GM10248 (cell line): ENCODE measurements at regions of chr1 and their contacts with region 1.

Region 1: DNA sequence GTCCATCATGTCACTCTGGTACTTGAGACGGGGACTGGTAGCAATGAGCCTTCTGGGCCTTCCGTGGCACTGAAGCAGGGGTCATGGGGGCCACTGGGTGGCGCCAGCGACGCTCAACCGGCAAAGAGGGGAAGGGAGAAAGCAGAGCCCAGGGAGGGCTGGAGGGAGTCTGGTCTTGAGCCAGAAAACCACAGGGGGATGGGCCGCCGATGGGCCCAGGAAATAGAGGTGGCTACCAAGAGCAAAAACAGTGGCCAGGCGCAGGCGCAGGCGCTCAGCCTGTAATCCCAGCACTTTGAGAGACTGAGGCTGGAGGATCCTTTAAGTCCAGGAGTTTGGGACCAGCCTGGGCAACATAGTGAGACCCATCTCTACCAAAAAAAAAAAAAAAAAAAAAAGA is 21.8 kb downstream of the EXOC8 start:
- DNase-seq: peak; percentile 58
- CTCF ChIP-seq: peak; percentile 85

Region 2: GRCh38 chr1:231301990-231302389 is 13.9 kb before region 1 on chr1:
- CTCF ChIA-PET with region 1: interaction called, 24 read pairs
- POLR2A ChIA-PET with region 1: no interaction called
- DNase-seq: no peak
- CTCF ChIP-seq: no peak

Region 3: GRCh38 chr1:231337472-231338269 is 21.8 kb after region 1 on chr1 and contains the start of gene EXOC8:
- CTCF ChIA-PET with region 1: interaction called, 87 read pairs
- POLR2A ChIA-PET with region 1: interaction called, 3 read pairs
- DNase-seq: peak; percentile 97
- CTCF ChIP-seq: no peak

Region 4: GRCh38 chr1:231603598-231604275 is 287.9 kb after region 1 on chr1:
- CTCF ChIA-PET with region 1: interaction called, 22 read pairs
- POLR2A ChIA-PET with region 1: no interaction called
- DNase-seq: peak; percentile 40
- CTCF ChIP-seq: peak; percentile 50